Cardiac septum (tissue), 1 donor: ENCODE measurements at regions of chr1 and their contacts with region 1.

Region 1: DNA sequence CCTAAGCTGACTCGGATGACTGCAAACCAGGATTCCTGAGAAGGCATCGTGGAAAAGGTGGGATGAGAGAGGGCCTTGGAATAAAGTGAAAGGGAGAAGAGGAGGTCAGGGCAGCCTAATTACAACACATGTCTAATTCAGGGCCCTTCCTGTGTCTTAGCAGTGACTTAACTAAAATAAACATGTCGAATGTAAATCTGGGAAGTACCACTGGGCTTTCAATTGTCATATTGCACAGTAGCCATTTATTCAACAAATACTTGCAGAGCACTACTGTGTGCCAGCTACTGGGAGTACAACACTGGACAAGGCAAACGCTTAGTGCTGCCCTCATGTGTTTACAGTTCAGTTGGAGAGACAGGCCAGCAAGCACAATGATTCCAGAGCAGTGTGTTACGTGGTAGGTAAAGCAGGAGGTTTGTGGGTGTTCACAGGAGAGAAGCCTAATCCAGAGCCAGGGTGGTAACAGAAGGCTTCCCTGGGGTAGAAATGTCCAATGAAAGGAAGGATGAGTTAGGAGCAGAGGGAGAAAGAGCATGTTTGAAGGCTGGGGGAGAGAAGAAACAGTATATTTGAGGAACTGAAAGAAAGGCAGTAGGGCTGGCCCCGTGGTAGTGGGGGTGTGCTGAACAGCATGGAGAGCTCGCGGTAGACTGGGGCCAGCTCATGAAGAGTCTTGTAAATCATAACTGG is 38.0 kb upstream of the RASAL2 start:
- DNase-seq: no peak

Region 2: DNA sequence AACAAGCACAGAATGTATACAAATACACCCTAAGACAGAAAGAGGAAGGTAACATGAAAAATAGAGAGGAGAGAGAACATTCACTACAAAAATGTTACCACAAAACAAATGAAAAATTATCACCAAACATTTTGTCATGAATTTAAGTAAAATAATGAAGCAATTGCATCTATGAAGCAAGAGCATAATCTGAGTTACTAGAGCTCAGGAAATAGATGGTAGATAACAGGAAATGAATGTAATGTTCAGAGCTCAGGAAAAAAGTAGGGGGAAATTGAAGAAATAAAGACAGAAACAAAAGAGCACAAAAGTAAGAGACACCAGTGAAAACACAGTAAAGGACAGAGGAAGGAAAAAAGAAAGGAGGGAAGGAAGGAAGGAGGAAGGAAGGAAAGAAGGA is 105.4 kb before region 1 on chr1:
- intact Hi-C with region 1: no loop called
- DNase-seq: no peak

Region 3: GRCh38 chr1:178031856-178032320 is 24.0 kb before region 1 on chr1:
- intact Hi-C with region 1: loop called (anchors 2 kb)
- DNase-seq: peak; percentile 89

Region 4: DNA sequence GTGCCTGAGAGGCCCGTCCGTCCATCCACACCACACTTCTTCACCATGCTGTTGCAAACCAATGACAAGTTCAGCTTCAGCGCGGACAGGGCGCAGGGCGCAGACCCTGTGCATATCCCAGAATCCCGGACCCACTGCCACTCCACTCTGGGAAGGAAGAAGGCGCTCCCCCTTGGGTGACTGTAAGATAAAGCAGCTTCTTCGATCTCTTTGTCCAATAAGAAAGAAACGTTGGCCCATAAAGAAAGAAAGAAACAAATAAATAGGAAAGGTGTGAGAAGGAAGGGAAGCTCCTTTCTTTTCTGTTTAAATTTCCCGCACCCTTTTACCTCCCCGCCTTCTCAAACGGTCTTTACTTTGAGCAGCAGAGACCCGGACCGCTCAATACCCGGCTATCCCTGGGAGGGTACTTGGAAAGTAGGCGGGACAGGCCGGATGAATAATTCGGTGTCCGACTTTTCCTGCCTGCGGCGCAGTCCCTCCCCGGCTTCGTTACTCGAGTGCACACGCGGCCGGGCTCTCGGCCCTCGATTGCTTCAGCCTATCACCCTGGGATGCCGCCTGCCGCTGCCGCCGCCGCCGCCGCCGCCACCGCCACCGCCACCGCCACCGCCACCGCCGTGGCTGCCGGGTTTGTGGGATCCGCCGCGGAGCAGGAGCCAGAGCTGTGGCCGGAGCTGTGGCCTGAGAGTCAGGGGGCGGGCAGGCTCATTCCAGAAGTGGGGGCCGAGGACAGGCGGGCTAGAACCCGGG is 37.5 kb after region 1 on chr1:
- intact Hi-C with region 1: loop called (anchors 2 kb)
- DNase-seq: peak; percentile 94

Region 5: GRCh38 chr1:178189814-178190213 is 133.9 kb after region 1 on chr1:
- intact Hi-C with region 1: loop called (anchors 5 kb)
- DNase-seq: no peak

Region 6: GRCh38 chr1:178344513-178345082 is 288.7 kb after region 1 on chr1:
- intact Hi-C with region 1: loop called (anchors 5 kb)
- DNase-seq: no peak